ENCODE measurements at regions of chr7 and their contacts with region 1.

Region 1: DNA sequence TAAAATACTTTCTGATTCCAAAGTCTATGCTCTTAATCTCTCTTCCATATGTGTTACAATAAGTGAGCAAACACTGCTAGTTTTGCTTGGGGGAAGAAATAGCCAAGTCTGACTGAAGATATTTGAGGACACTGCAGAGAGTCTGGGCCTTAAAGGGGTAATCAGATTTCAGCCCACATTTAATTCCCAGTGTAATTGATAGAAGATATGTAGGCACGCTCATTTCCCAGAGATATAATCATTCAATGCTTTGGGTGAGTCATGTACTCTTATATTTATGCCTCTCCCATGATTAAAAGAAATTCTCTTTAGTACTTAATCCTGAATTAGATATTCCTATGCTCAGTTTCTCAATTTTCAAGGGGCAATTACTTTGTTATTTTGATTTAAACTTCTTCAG is 178.1 kb upstream of the POM121L12 start:
- DNase-seq: no peak
- H3K4me3 Mint-ChIP-seq: no peak overlapping the region
- H3K27ac Mint-ChIP-seq: no peak overlapping the region
- H3K4me1 Mint-ChIP-seq: no peaks in the 10 kb centered on the region
- H3K27me3 Mint-ChIP-seq: no peaks in the 10 kb centered on the region

Region 2: DNA sequence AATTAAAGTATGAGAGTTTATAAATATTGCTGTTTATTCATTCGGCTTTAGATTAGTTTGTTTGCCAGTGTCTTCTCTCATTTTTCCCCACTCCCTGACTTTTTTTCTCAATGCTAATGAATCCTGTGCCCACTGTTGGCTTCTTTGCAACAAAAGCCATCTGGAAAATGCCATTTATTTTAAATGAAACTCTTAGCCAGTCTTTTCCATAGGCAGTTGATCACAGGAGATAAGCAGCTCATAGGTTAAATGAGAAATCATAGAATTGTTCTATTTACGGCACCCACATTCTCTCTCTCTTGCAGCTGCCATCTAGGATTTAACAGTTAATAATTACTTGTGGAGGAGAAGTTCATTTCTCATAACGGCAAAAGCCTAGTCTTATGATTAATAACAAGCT is 71.2 kb before region 1 on chr7:
- intact Hi-C with region 1: loop called (anchors 10 kb)
- DNase-seq: no peak
- H3K4me3 Mint-ChIP-seq: no peak overlapping the region
- H3K27ac Mint-ChIP-seq: no peak overlapping the region
- H3K4me1 Mint-ChIP-seq: no peaks in the 10 kb centered on the region
- H3K27me3 Mint-ChIP-seq: no peaks in the 10 kb centered on the region

Measured in activated CD4-positive, alpha-beta T cell treated with anti-CD3 and anti-CD28 coated beads, Interleukin-2, amount 10 ng/mL, durations not matched to agents 24 days and 14 days (primary cell).